ENCODE measurements at regions of chr17 and their contacts with region 1.

Region 1: DNA sequence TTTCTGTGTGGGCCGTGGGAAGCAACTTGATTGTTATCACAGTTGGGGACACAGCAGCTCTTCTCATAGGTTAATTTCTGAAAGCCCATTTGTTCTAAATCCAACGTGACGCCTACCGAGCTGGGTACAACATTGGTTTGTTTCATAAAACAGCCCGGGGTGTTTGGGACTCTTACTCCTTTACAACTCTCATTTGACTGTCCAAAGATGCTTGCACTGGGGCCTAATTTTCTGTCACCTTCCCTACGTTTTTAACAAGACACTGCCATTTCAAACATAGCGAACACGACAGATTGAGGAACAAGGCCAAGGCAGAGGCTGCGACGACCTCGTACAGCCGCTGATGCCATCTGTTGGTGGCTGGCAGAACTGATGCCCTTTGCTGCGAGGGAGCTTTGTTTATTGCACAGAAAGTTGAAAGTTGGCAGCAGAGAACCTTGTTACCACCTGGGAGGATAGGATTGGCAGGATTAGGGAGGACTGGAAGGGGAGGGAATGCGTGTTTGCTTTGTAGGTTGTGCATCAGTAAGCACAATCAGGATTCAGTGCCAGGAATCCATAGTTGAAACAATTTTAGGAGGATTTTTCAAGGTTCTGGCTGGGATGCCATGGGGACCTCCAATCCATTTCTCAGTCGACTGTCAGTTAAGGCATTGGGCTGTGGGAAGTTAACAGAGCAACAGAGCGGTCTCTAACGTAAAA is 98.3 kb downstream of the PITPNC1 start:
- DNase-seq: peak; percentile 73 to 89 (median 81)
- H3K4me3 ChIP-seq: peak overlapping the region; percentile 53
- H3K4me3 Mint-ChIP-seq: peak overlapping the region; percentile 42 to 87 (median 78)
- H3K27ac ChIP-seq: peak overlapping the region; percentile 48
- H3K27ac Mint-ChIP-seq: peak overlapping the region; percentile 91 to 99 (median 94)
- H3K4me1 ChIP-seq: peaks cover 71% of the 10 kb centered on the region
- H3K4me1 Mint-ChIP-seq: peaks cover 69 to 82% (median 73%) of the 10 kb centered on the region in 3 donors
- H3K27me3 ChIP-seq: no peaks in the 10 kb centered on the region
- H3K27me3 Mint-ChIP-seq: no peaks in the 10 kb centered on the region

Region 2: DNA sequence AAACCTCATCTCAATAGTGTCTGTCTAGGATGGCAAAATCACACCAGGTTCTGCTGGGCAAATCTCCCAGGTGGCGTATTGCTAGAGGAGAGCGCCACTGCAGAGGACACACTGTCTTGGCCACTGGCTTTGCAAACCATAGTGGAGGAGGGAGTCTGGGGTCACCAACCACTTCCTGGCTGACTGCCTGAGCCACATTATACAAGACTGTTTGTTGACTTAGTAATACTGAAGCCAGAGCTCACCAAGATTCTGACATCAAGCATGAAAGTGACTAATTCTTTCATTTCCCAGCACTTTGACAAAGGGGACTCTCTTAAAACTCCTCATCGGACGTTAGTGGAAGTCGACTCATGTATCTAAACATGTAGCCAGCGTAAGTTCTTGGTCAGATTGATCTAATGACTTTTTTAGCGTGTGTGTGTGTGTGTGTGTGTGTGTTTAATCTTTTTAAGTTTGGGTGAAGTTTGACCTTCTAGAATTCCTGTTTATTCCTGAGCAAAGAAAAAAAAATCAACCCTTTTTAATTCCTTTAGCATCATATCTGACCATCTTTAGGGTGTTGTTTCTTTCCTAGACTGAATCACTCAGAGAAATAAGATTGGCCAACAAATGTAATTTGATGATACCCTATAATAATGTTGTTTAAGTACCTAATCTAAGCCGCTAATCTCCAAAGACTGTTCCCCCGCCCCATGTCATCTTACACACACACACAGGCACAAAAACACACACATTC is 84.6 kb before region 1 on chr17:
- CTCF ChIA-PET with region 1: interaction called, 81 read pairs
- POLR2A ChIA-PET with region 1: interaction called, 17 read pairs
- DNase-seq: peak; percentile 42 to 82 (median 55)
- H3K4me3 ChIP-seq: peak overlapping the region; percentile 3
- H3K4me3 Mint-ChIP-seq: peak overlapping the region; percentile 75 to 96 (median 84)
- H3K27ac ChIP-seq: peak overlapping the region; percentile 1
- H3K27ac Mint-ChIP-seq: peak overlapping the region; percentile 89 to 99 (median 94)
- H3K4me1 ChIP-seq: peaks cover 69% of the 10 kb centered on the region
- H3K4me1 Mint-ChIP-seq: peaks cover 69 to 94% (median 88%) of the 10 kb centered on the region in 3 donors
- H3K27me3 ChIP-seq: no peaks in the 10 kb centered on the region
- H3K27me3 Mint-ChIP-seq: no peaks in the 10 kb centered on the region

Region 3: DNA sequence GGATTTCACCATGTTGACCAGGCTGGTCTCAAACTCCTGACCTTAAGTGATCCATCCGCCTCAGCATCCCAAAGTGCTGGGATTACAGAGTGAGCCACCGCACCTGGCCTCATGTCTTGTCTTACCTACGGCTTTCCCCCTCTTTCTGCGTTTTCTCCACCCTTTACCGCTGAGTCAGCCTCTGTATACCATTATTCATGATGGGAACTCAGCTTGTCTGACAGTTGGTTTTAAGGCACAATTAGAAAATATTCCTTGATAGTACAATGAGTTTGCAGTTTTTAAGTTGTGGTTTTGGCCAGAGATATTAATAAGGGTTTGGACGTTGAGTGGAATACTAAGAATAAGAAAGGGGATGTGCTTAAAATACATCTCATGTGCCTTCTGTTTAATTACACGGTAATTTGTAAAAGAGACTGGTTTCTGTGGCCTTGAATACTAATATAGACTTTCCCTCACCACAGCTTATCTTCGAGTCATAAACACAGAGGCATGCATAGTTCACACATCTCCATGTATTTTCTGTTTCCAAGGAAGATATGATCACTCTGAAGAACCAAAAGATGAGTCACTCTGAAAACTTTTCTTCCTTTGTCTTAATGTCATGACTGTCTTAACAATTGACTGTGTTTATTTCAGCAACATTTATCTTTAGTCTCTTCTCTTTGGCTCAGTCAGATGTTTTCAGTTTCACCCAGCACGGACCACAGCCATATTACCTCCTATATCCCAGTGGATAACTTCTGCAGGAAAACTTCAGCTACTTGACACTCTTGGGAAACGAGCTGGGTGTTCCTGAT is 43.9 kb before region 1 on chr17:
- CTCF ChIA-PET with region 1: interaction called, 20 read pairs
- POLR2A ChIA-PET with region 1: interaction called, 4 read pairs
- DNase-seq: no peak
- H3K4me3 ChIP-seq: no peak overlapping the region
- H3K4me3 Mint-ChIP-seq: peak overlapping the region in 4 of 7 donors; percentile 0 to 60 (median 14)
- H3K27ac ChIP-seq: no peak overlapping the region
- H3K27ac Mint-ChIP-seq: peak overlapping the region; percentile 44 to 95 (median 83)
- H3K4me1 ChIP-seq: peaks cover 61% of the 10 kb centered on the region
- H3K4me1 Mint-ChIP-seq: peaks cover 66 to 79% (median 72%) of the 10 kb centered on the region in 3 donors
- H3K27me3 ChIP-seq: no peaks in the 10 kb centered on the region
- H3K27me3 Mint-ChIP-seq: peaks cover 0 to 2% of the 10 kb centered on the region in 2 donors

Region 4: DNA sequence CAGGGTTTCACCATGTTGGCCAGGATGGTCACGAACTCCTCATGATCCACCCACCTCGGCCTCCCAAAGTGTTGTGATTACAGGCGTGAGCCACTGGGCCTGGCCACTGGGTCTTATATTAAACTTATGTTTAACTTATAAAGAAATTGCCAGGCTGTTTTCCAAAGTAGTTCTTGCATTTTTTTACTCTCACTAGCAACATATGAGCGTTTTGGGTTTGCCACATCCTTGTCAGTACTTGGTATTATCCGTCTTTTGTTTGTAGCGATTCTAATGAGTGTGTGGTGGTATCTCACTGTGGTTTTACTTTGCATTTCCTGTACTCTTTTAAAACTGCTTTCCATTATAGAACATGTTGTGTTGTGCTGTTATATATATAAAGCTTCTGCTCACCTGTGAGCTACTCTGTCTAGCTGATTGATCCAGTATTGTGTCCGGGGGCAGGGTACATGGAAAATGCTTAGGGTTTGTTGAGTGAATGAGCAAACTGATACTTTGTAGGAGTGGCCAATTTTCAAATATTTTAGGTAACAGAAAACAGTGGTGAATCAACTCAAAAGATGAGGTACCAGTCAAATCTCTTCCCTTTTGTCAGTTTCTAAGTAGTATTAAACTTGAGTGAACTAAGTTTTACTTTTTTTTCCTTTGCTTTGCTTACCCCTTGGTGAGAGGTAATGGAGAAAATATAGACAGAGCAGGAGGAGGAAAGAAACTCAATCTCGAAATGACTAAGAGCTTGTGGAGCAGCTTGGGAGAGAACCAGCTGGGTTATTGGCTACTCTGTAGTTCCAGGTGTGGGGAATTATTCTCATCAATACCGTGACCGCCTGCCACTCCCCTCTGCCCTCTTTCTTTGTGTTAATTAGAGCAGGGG is 22.5 kb before region 1 on chr17:
- CTCF ChIA-PET with region 1: interaction called, 29 read pairs
- POLR2A ChIA-PET with region 1: interaction called, 17 read pairs
- DNase-seq: peak in 3 of 5 donors; percentile 52 to 78 (median 77)
- H3K4me3 ChIP-seq: peak overlapping the region; percentile 11
- H3K4me3 Mint-ChIP-seq: peak overlapping the region; percentile 61 to 83 (median 77)
- H3K27ac ChIP-seq: peak overlapping the region; percentile 20
- H3K27ac Mint-ChIP-seq: peak overlapping the region; percentile 88 to 99 (median 94)
- H3K4me1 ChIP-seq: peaks cover 90% of the 10 kb centered on the region
- H3K4me1 Mint-ChIP-seq: peaks cover 88 to 100% (median 97%) of the 10 kb centered on the region in 3 donors
- H3K27me3 ChIP-seq: no peaks in the 10 kb centered on the region
- H3K27me3 Mint-ChIP-seq: no peaks in the 10 kb centered on the region

Region 5: GRCh38 chr17:67491009-67491680 is 15.8 kb after region 1 on chr17:
- CTCF ChIA-PET with region 1: interaction called, 25 read pairs
- POLR2A ChIA-PET with region 1: interaction called, 3 read pairs
- DNase-seq: no peak
- H3K4me3 ChIP-seq: no peak overlapping the region
- H3K4me3 Mint-ChIP-seq: peak overlapping the region; percentile 48 to 87 (median 65)
- H3K27ac ChIP-seq: no peak overlapping the region
- H3K27ac Mint-ChIP-seq: peak overlapping the region; percentile 43 to 94 (median 74)
- H3K4me1 ChIP-seq: peaks cover 48% of the 10 kb centered on the region
- H3K4me1 Mint-ChIP-seq: peaks cover 85 to 93% (median 87%) of the 10 kb centered on the region in 3 donors
- H3K27me3 ChIP-seq: no peaks in the 10 kb centered on the region
- H3K27me3 Mint-ChIP-seq: no peaks in the 10 kb centered on the region